Cardiac septum (tissue), 1 donor: ENCODE measurements at regions of chr6 and their contacts with region 1.

Region 1: GRCh38 chr6:10478187-10479040 is 42.7 kb upstream of the GCNT2 start:
- DNase-seq: no peak

Region 2: DNA sequence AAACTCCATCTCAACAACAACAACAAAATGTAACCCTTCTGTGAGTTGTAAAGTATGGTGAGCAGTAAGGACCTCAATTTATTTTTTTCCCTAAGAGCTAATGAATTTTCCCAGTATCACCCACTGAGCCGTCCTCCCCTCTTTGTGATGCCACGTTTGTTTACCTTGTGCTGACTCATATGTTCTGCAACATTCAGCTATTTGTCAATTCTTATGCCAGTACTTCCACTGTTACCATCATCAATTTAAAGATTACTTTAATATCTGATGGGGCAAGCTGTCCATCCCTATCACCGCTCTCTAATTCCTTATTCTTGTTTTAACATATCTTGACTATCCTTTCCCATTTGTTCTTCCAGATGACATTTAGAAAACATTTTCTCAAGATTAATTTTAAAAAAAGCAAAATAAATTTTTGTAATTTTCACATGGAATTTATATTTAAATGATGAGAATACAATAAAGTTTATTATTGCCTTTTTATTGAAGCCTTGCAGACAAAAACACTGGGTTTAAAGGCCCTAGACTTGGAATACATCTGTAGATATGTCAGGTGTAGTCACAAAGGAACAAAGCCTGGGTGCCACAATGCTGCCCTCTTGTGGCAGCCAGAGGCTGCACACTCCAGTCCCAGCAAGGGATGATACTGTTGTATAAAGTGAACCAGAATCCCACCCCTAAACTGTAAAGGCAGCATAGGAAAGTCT is 322.6 kb after region 1 on chr6:
- intact Hi-C with region 1: loop called (anchors 2 kb)
- DNase-seq: peak; percentile 84

Region 3: GRCh38 chr6:11067348-11067747 is 588.9 kb after region 1 on chr6:
- intact Hi-C with region 1: loop called (anchors 10 kb)
- DNase-seq: no peak